ENCODE measurements at regions of chr1 and their contacts with region 1.

Region 1: DNA sequence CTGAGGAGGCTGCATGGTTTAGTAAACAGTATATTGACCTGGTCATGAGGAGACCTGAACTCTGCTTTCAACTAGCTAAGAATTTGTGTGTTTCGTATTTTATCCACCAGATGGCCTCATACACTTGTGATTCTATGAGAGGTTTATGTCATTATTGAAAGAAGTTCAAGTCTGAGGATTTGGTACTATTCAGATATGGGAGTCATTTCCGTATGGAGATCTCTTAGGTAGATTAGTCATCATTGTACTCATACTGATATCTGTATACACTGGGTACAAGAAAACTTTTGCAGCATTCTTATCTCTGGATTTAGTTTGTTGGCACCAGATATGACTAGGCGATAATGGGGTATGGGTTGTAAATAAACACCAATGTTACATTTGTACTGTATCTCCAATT is 26.6 kb downstream of the ATF6 start:
- DNase-seq: peak; percentile 68
- H3K27ac ChIP-seq: no peak overlapping the region
- CTCF ChIP-seq: peak; percentile 59

Region 2: GRCh38 chr1:161805399-161806197 is 12.9 kb after region 1 on chr1:
- CTCF ChIA-PET with region 1: no interaction called
- POLR2A ChIA-PET with region 1: no interaction called
- DNase-seq: no peak
- H3K27ac ChIP-seq: no peak overlapping the region
- CTCF ChIP-seq: no peak

Region 3: DNA sequence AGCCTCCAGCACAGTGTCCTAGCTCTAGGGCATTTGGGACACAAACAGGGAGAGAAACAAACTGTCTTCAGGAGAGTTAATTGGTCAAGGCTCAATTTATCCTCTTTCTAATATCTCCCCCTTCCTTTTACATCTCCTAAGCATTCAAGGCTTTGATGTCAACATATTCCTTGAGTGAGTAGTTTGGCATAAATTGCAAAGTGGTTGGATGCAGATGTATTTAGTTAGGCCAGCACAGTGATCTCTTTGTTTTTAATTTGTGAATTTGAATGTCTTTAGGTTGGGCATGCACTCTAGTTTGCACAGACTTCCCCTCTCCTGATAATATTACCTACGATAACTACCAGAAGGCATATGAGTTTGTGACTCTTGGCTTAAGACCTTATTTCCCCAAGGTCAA is 243.4 kb after region 1 on chr1:
- CTCF ChIA-PET with region 1: interaction called, 34 read pairs
- POLR2A ChIA-PET with region 1: no interaction called
- DNase-seq: no peak
- H3K27ac ChIP-seq: no peak overlapping the region
- CTCF ChIP-seq: no peak